ENCODE measurements at regions of chr20 and their contacts with region 1.

Region 1: GRCh38 chr20:8853805-8854338 is 215.0 kb upstream of the PLCB4 start:
- DNase-seq: no peak
- ATAC-seq: peak; percentile 89
- H3K4me3 Mint-ChIP-seq: no peak overlapping the region
- H3K27ac Mint-ChIP-seq: no peak overlapping the region
- H3K4me1 Mint-ChIP-seq: no peaks in the 10 kb centered on the region; the same call in 1 of the 2 replicates
- H3K27me3 Mint-ChIP-seq: no peaks in the 10 kb centered on the region
- CTCF ChIP-seq: peak; percentile 80

Region 2: DNA sequence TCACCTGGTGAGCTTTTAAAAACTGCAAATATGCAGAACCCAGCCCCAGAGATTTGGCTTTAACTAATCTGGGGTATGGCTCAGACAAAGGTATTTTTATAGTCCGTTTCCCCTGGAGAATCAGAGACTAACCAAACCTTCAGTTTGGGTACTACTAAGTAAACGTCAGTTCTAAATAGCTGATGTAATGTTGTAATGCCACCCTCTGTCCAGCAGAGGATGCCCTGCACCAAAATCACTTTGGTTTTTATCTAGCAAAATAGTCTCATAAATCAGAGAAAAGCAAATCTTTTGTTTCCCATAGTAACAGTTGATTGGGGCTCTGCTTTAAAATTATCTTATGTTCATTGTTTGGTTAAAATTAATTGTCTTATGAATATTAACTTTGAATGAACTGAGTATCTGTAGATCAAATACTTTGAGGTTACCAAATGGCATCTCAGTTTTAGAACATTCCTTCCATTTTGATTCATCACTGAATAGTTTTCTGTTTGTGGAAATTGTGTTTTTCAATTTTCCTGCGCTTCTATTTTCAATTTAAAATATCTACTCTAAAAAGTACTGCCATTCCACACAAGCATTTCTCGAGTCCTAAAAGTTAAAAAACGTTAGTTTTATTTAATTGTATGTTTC is 63.3 kb before region 1 on chr20:
- CTCF ChIA-PET with region 1: interaction called, 12 read pairs
- POLR2A ChIA-PET with region 1: no interaction called
- DNase-seq: peak; percentile 42
- ATAC-seq: peak; percentile 60; the same call in 1 of the 2 replicates
- H3K4me3 Mint-ChIP-seq: no peak overlapping the region
- H3K27ac Mint-ChIP-seq: no peak overlapping the region
- H3K4me1 Mint-ChIP-seq: peaks cover 19% of the 10 kb centered on the region
- H3K27me3 Mint-ChIP-seq: peaks cover 5% of the 10 kb centered on the region; the same call in 1 of the 2 replicates
- CTCF ChIP-seq: peak; percentile 98

Region 3: DNA sequence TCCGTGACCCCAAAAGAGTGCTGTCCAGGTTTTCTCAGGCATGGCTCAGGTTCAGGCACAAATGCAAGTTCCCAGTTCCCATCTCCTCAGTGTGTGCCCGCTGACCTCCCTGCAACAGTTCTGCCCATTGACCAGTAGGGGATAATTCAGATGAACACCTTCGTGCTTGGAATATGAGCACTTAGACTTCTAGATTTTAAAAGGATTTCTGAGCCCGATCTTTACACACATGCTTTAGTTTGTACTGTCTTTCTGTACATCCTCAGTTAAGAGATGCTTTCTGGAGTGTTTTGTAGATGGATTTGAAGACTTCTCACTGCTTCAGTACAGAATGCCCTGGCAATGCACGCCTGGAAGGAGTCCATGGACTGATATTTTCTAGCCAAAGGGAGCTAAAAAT is 24.6 kb before region 1 on chr20:
- CTCF ChIA-PET with region 1: interaction called, 11 read pairs
- POLR2A ChIA-PET with region 1: no interaction called
- DNase-seq: no peak
- ATAC-seq: peak; percentile 78
- H3K4me3 Mint-ChIP-seq: no peak overlapping the region
- H3K27ac Mint-ChIP-seq: no peak overlapping the region
- H3K4me1 Mint-ChIP-seq: no peaks in the 10 kb centered on the region
- H3K27me3 Mint-ChIP-seq: peaks cover 2% of the 10 kb centered on the region; the same call in 1 of the 2 replicates
- CTCF ChIP-seq: peak; percentile 20; the same call in 1 of the 2 replicates

Region 4: DNA sequence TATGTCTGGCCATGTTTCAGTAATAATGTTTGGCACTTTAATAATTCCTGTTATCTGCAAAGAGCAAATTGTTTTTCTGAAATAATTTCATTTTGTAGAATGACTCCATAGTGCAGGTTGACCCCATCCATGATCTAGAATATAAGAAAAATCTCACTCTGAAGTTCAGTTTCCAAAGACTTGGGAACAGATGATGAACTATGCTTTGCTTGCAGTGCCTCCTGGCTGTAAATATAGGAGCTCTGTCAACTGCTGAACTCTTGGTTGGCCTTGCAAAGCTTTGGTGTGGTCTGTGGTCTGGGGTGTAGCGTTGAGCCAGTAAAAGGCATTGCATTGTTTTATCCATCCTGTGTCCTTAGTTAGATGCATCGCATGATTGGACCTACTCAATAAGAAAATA is 319.0 kb after region 1 on chr20:
- CTCF ChIA-PET with region 1: interaction called, 10 read pairs
- POLR2A ChIA-PET with region 1: no interaction called
- DNase-seq: no peak
- ATAC-seq: peak; percentile 70
- H3K4me3 Mint-ChIP-seq: no peak overlapping the region
- H3K27ac Mint-ChIP-seq: peak overlapping the region; percentile 22; the same call in 1 of the 2 replicates
- H3K4me1 Mint-ChIP-seq: peaks cover 15% of the 10 kb centered on the region
- H3K27me3 Mint-ChIP-seq: no peaks in the 10 kb centered on the region
- CTCF ChIP-seq: no peak

Region 5: GRCh38 chr20:9359561-9360308 is 505.9 kb after region 1 on chr20:
- CTCF ChIA-PET with region 1: interaction called, 12 read pairs
- POLR2A ChIA-PET with region 1: no interaction called
- DNase-seq: peak; percentile 35
- ATAC-seq: peak; percentile 78
- H3K4me3 Mint-ChIP-seq: no peak overlapping the region
- H3K27ac Mint-ChIP-seq: no peak overlapping the region
- H3K4me1 Mint-ChIP-seq: peaks cover 11% of the 10 kb centered on the region
- H3K27me3 Mint-ChIP-seq: no peaks in the 10 kb centered on the region
- CTCF ChIP-seq: peak; percentile 29; the same call in 1 of the 2 replicates

Measured in WTC11 (cell line).